Activated B cell treated with CpG ODN at 0.5 μM for 24 hours (primary cell): ENCODE measurements at regions of chr11 and their contacts with region 1.

Region 1: GRCh38 chr11:47329987-47330931 is 22.2 kb downstream of the MYBPC3 start:
- DNase-seq: no peak
- ATAC-seq: no peak
- H3K4me3 Mint-ChIP-seq: no peak overlapping the region
- H3K27ac Mint-ChIP-seq: no peak overlapping the region
- H3K4me1 Mint-ChIP-seq: peaks cover 14% of the 10 kb centered on the region
- H3K27me3 Mint-ChIP-seq: no peaks in the 10 kb centered on the region
- CTCF ChIP-seq: no peak

Region 2: DNA sequence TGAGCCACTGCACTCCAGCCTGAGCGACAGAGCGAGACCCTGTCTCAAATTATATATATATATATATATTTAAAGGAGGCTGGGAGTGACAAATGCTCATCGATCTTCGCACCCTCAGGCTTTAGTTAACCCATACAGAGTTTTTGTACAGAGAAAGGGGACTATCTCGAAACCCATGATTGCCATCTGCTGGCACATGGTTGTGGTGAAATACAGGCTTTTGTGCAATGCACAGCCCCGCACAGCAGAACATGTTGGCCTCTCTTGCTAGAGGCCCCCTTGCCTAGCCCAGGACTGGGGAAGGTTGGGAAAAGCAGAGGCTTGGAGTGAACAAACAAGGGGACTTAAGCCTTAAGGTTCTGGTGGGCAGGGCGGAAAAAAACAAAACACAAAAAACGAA is 18.6 kb after region 1 on chr11:
- CTCF ChIA-PET with region 1: no interaction called
- POLR2A ChIA-PET with region 1: interaction called, 3 read pairs
- intact Hi-C with region 1: loop called (anchors 2 kb)
- DNase-seq: no peak
- ATAC-seq: no peak
- H3K4me3 Mint-ChIP-seq: no peak overlapping the region
- H3K27ac Mint-ChIP-seq: no peak overlapping the region
- H3K4me1 Mint-ChIP-seq: no peaks in the 10 kb centered on the region
- H3K27me3 Mint-ChIP-seq: no peaks in the 10 kb centered on the region
- CTCF ChIP-seq: no peak

Region 3: GRCh38 chr11:47454180-47454644 is 124.0 kb after region 1 on chr11:
- CTCF ChIA-PET with region 1: no interaction called
- POLR2A ChIA-PET with region 1: no interaction called
- intact Hi-C with region 1: loop called (anchors 1 kb)
- DNase-seq: peak; percentile 24
- ATAC-seq: peak; percentile 96
- H3K4me3 Mint-ChIP-seq: no peak overlapping the region
- H3K27ac Mint-ChIP-seq: no peak overlapping the region
- H3K4me1 Mint-ChIP-seq: peaks cover 5% of the 10 kb centered on the region
- H3K27me3 Mint-ChIP-seq: no peaks in the 10 kb centered on the region
- CTCF ChIP-seq: no peak